Activated CD8-positive, alpha-beta memory T cell treated with anti-CD3 and anti-CD28 coated beads, Interleukin-2, amount 10 ng/mL, durations not matched to agents 7 days and 5 days (primary cell): ENCODE measurements at regions of chr19 and their contacts with region 1.

Region 1: GRCh38 chr19:5622463-5623396 is at the starts of genes SAFB and SAFB2:
- DNase-seq: peak; percentile 100
- ATAC-seq: peak; percentile 92
- H3K4me3 Mint-ChIP-seq: peak within 1 kb of the TSS; percentile 99
- H3K27ac Mint-ChIP-seq: peak within 1 kb of the TSS; percentile 100
- H3K4me1 Mint-ChIP-seq: peaks cover 63% of the 10 kb centered on the region
- H3K27me3 Mint-ChIP-seq: peaks cover 5% of the 10 kb centered on the region
- total RNA-seq, gene SAFB: 134 to 152 TPM
- total RNA-seq, gene SAFB2: 110 to 125 TPM

Region 2: DNA sequence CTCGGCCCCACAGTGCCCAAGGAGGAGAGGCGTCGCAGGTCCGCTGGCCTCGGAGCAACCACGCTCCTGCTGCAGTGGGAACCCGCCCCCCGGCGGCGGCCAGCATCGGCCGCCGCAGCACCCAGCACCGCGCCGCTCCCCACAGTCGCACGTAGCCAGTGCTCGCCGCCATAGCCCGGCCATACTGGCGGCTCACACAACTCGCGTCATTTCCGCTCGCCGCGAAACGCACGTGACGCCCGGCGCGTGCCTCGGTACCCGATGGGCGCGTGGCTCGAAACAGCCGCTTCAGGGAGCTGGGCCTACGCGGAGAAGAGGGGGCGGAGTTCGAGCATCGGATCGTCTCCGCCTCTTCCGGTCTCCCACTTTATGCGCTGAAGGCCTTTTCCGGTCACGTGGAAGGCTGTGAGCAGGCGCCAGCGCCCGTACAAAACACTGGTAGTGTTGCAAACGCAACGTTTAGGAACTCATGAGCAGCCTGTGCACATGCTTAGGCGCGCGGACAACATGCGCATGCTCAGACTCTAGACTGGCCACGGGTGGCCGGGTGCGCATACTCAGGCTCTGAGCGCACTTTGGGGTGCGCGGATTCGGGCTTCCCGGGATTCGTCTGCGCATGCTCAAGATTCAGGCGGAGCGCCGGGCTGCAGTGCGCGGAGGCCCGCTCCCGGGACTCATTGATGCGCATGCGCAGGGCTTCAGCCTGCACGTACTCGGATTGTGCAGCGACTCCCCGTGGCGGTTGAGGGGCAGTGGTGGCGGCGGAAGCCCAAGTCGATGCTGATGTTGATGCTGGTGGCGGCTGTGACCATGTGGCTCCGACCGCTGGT is 97.4 kb after region 1 on chr19 and contains the starts of genes CATSPERD and LONP1:
- CTCF ChIA-PET with region 1: interaction called, 10 read pairs
- DNase-seq: peak; percentile 99
- ATAC-seq: peak; percentile 88
- H3K4me3 Mint-ChIP-seq: peak within 1 kb of the TSS; percentile 92
- H3K27ac Mint-ChIP-seq: peak within 1 kb of the TSS; percentile 98
- H3K4me1 Mint-ChIP-seq: peaks cover 37% of the 10 kb centered on the region
- H3K27me3 Mint-ChIP-seq: no peaks in the 10 kb centered on the region
- total RNA-seq, gene CATSPERD: not detected
- total RNA-seq, gene LONP1: 134 to 141 TPM